Activated T-helper 1 cell treated with anti-CD3 and anti-CD28 coated beads, Interleukin-12 subunit alpha, Interleukin-12 subunit beta, Interleukin-2, Interleukin-4 antibody, amounts not matched to agents 30 ng/mL and 10 ng/mL and 1 ng/mL, durations not matched to agents 14 hours and 24 hours and 36 hours (primary cell): ENCODE measurements at regions of chr12 and their contacts with region 1.

Region 1: GRCh38 chr12:47819896-47820630 is at the start of gene HDAC7:
- DNase-seq: peak; percentile 54
- H3K4me3 Mint-ChIP-seq: peak within 1 kb of the TSS; percentile 96
- H3K27ac Mint-ChIP-seq: peak within 1 kb of the TSS; percentile 98
- H3K4me1 Mint-ChIP-seq: peaks cover 78% of the 10 kb centered on the region
- H3K27me3 Mint-ChIP-seq: peaks cover 1% of the 10 kb centered on the region
- total RNA-seq, gene HDAC7: 453 and 466 TPM in 2 replicates

Region 2: DNA sequence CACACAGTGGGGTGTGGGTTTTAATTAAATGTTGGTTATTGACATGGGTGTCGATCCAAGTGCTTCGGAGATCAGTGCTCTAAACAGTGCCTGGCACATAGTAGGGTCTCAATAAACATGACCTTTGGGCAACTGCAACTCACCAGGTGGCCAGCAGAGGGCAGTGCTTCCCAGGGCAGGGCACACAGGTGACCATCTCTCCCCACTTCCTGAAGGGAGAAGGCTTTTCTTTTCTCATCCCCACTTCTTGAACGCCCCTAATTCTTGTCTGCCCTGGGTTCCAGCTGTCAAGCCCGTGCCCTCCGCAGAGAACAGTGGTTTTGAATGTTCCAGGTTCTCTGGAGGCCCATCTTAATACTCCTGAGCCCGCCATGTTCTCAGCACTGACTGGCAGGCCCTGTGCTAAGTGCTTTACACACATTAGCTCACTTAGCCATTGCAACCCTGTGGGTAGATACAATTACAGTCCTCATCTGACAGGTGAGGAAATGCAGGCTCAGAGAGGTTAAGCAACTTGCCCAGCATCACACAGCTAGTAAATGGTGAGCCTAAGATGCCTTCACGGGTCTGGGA is 77.7 kb before region 1 on chr12:
- intact Hi-C with region 1: no loop called
- DNase-seq: peak; percentile 61
- H3K4me3 Mint-ChIP-seq: no peak overlapping the region
- H3K27ac Mint-ChIP-seq: no peak overlapping the region
- H3K4me1 Mint-ChIP-seq: peaks cover 6% of the 10 kb centered on the region
- H3K27me3 Mint-ChIP-seq: peaks cover 17% of the 10 kb centered on the region

Region 3: GRCh38 chr12:47793015-47793681 is 26.9 kb before region 1 on chr12:
- intact Hi-C with region 1: no loop called
- DNase-seq: no peak
- H3K4me3 Mint-ChIP-seq: no peak overlapping the region
- H3K27ac Mint-ChIP-seq: no peak overlapping the region
- H3K4me1 Mint-ChIP-seq: peaks cover 8% of the 10 kb centered on the region
- H3K27me3 Mint-ChIP-seq: no peaks in the 10 kb centered on the region

Region 4: GRCh38 chr12:47832263-47832933 is 12.3 kb after region 1 on chr12:
- intact Hi-C with region 1: loop called (anchors 1 kb)
- DNase-seq: no peak
- H3K4me3 Mint-ChIP-seq: peak overlapping the region; percentile 75
- H3K27ac Mint-ChIP-seq: peak overlapping the region; percentile 98
- H3K4me1 Mint-ChIP-seq: peaks cover 93% of the 10 kb centered on the region
- H3K27me3 Mint-ChIP-seq: no peaks in the 10 kb centered on the region